Activated CD8-positive, alpha-beta memory T cell treated with anti-CD3 and anti-CD28 coated beads, Interleukin-2, amount 10 ng/mL, durations not matched to agents 7 days and 5 days (primary cell): ENCODE measurements at regions of chr19 and their contacts with region 1.

Region 1: DNA sequence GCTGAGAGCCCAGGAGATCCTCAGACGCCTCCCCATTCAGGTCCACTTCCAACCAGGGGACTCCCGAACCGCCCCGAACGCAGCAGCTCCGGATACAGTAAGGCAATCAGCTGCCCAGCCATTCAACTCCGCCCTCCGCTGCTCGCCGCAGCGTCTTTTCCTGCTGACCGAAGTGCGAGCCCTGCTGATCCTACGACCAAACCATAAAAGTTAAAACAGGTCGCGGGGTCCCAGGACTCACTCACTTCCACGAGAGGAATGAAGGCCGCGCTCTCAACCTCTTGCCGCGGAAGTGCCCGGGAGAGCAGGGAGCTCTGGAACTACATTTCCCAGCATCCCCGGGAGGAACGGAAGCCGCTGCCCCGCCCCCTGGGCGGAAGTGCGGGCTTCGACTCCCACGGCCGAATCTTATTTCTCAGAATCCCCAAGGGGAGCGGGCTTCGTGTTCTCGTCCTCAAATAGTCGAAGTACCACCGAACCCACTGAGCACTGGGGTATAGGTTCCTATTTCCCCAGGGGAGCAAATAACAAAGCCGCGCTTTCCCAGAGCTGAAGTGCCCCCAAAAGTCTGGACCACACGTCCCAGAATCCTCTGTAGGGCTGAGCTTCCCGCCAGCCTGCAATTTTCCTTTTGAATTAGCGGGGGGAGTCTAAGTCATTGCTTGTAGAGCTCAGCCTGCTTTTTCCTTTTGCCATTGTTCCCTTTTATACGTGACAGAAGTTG is at the start of gene ZNF45:
- DNase-seq: peak; percentile 91
- ATAC-seq: peak; percentile 97
- H3K4me3 Mint-ChIP-seq: peak within 1 kb of the TSS; percentile 91
- H3K27ac Mint-ChIP-seq: peak within 1 kb of the TSS; percentile 90
- H3K4me1 Mint-ChIP-seq: peaks cover 16% of the 10 kb centered on the region
- H3K27me3 Mint-ChIP-seq: no peaks in the 10 kb centered on the region
- total RNA-seq, gene ZNF45: 17.1 to 17.9 TPM

Region 2: DNA sequence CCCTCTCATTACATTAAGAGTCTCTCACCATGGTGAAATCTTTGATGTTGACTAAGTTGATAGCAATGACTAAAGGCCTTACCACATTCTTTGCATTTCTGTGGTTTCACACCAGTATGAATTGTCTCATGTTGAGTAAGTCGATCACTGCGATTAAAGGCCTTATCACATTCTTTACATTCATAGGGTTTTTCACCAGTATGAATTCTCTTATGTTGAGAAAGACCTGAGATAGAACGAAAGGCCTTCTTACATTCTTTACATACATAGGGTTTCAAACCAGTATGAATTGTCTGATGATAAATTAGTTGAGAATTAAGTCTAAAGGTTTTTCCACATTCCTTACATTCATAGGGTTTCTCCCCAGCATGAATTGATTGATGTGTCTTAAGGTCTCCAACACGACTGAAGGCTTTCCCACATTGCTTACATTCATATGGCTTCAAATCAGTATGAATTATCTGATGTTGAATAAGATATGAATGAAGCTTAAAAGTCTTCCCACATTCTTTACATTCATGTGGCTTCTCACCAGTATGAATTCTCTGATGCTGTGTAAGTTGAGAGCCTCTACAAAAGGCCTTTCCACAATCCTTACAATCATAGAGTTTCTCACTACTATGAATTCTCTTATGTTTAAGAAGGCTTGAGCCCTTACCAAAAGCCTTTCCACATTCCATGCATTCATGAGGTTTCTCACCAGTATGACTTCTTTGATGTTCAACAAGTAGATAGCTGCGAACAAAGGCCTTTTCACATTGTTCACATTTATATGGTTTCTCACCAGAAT is 62.4 kb before region 1 on chr19:
- CTCF ChIA-PET with region 1: no interaction called
- DNase-seq: no peak
- ATAC-seq: no peak
- H3K4me3 Mint-ChIP-seq: no peak overlapping the region
- H3K27ac Mint-ChIP-seq: no peak overlapping the region
- H3K4me1 Mint-ChIP-seq: no peaks in the 10 kb centered on the region
- H3K27me3 Mint-ChIP-seq: no peaks in the 10 kb centered on the region

Region 3: DNA sequence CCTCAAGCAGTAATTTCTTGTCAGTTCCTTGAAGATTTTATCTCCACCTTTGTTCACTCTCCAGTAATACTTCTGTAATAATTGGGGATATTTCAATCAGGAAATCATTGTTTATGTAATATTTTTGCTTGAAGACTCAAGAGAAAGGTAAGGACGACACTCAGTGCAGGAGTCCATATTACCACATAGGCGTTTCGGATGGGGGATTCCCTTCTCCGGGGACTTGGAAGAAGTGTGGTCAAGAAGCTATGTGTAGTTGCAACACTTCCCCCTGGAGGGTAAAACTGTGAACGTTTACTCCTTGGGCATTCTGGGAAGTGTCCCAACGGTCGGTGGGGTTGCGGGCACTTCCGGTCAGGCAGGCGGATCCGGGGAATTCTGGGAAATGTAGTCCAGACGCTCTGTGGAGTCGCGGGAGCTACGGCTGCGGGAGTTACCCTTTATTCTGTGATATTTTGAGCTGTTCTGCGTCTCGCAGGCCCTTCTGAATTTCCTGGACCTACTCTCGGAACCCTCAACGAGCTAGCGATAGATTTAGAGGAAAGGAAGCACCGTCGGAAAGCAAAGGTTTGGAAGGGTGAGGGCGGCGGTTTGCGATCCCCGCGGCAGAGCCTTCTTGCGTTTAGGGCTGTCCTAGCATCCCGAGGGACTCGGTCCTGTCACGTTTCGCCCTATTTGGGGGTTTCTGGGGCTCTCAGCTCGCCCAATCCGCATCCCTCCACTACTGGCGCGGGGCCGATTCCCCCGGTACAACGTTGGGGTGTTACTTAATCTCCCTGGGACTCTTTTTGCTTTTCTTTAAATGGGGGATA is 15.9 kb after region 1 on chr19 and contains the start of gene ZNF221:
- CTCF ChIA-PET with region 1: interaction called, 18 read pairs
- DNase-seq: peak; percentile 82
- ATAC-seq: peak; percentile 94
- H3K4me3 Mint-ChIP-seq: peak within 1 kb of the TSS; percentile 87
- H3K27ac Mint-ChIP-seq: peak within 1 kb of the TSS; percentile 85
- H3K4me1 Mint-ChIP-seq: peaks cover 8% of the 10 kb centered on the region
- H3K27me3 Mint-ChIP-seq: peaks cover 6% of the 10 kb centered on the region
- total RNA-seq, gene ZNF221: 2.1 to 2.5 TPM

Region 4: GRCh38 chr19:43997631-43998290 is 62.6 kb after region 1 on chr19:
- CTCF ChIA-PET with region 1: no interaction called
- DNase-seq: no peak
- ATAC-seq: no peak
- H3K4me3 Mint-ChIP-seq: no peak overlapping the region
- H3K27ac Mint-ChIP-seq: no peak overlapping the region
- H3K4me1 Mint-ChIP-seq: peaks cover 9% of the 10 kb centered on the region
- H3K27me3 Mint-ChIP-seq: no peaks in the 10 kb centered on the region